CD4-positive, alpha-beta T cell (primary cell): ENCODE measurements at regions of chr10 and their contacts with region 1.

Region 1: DNA sequence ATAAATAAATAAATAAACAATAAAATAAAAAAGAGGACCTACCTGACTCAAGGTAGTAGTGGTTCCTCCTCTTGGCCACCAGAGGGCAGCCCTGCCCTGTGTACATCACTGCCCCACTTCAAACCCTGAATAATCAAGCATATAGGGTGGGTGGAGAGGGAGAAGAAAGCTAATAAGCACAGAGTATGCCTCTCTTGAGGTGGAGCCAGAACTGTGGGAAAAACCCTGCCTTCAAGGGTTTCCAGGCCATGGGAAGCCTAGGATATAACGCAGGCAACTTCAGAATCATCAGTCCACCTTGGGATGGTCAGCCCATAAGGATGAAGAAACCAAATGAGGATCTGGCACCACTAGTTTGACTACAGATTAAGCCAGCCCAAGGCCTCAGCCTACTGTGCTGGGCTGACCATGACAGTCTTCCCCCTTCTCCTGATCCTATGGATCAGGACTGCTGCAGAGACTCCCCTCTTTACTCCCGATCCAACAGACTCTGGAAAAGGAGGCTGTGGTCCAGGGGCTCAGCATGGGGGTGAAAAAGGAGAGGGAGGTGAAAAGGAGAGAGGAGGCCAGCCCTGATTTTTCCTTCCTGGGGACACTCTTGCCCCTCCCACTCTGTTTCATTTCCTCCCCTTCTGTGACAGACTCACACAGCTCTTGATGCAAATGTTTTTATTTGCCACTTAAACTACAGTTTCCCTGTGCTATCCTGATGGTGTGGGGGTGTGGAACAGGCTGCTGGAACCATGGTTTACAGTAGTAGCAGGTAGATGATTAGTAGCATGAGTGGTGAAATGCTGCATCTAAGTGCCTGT is 10.1 kb downstream of the AVPI1 start:
- DNase-seq: peak; percentile 19 to 82 (median 44)
- ATAC-seq: peak; percentile 94
- H3K4me3 ChIP-seq: no peak overlapping the region
- H3K4me3 Mint-ChIP-seq: no peak overlapping the region
- H3K27ac ChIP-seq: no peak overlapping the region
- H3K27ac Mint-ChIP-seq: no peak overlapping the region
- H3K4me1 ChIP-seq: peaks cover 5% of the 10 kb centered on the region
- H3K4me1 Mint-ChIP-seq: no peaks in the 10 kb centered on the region
- H3K27me3 ChIP-seq: no peaks in the 10 kb centered on the region
- H3K27me3 Mint-ChIP-seq: no peaks in the 10 kb centered on the region
- CTCF ChIP-seq: peak; percentile 91

Region 2: DNA sequence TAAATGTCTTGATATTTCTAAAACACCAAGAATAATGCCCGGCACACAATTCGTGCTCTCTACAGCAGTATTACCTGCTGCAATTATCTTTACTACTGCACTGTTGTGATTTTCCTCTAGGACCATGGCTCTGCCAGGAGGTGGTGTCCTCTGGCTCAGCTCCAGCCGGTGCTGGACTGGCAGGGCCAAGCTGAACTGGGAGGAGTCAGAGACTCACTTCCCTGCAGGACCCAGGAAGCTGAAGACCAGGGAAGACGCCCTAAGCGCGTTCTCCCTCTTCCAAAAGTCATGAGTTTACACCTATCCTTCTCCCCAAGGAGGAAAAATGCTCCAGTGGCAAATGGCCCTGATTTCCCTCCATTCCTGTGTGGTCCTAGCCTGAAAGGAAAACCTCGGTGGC is 506.6 kb before region 1 on chr10:
- CTCF ChIA-PET with region 1: no interaction called
- POLR2A ChIA-PET with region 1: no interaction called
- intact Hi-C with region 1: no loop called
- DNase-seq: no peak
- ATAC-seq: no peak
- H3K4me3 ChIP-seq: no peak overlapping the region
- H3K4me3 Mint-ChIP-seq: no peak overlapping the region
- H3K27ac ChIP-seq: no peak overlapping the region
- H3K27ac Mint-ChIP-seq: no peak overlapping the region
- H3K4me1 ChIP-seq: no peaks in the 10 kb centered on the region
- H3K4me1 Mint-ChIP-seq: no peaks in the 10 kb centered on the region
- H3K27me3 ChIP-seq: peaks cover 0 to 10% of the 10 kb centered on the region in 2 experiments
- H3K27me3 Mint-ChIP-seq: peaks cover 4% of the 10 kb centered on the region
- CTCF ChIP-seq: no peak

Region 3: GRCh38 chr10:97686962-97687784 is 10.2 kb after region 1 on chr10 and contains the start of gene AVPI1:
- CTCF ChIA-PET with region 1: interaction called, 27 read pairs
- POLR2A ChIA-PET with region 1: interaction called, 21 read pairs
- intact Hi-C with region 1: no loop called
- DNase-seq: peak; percentile 90 to 98 (median 94)
- ATAC-seq: peak; percentile 91
- H3K4me3 ChIP-seq: peak within 1 kb of the TSS; percentile 82
- H3K4me3 Mint-ChIP-seq: peak within 1 kb of the TSS; percentile 90
- H3K27ac ChIP-seq: peak within 1 kb of the TSS; percentile 52 to 62
- H3K27ac Mint-ChIP-seq: peak within 1 kb of the TSS; percentile 75
- H3K4me1 ChIP-seq: peaks cover 35% of the 10 kb centered on the region
- H3K4me1 Mint-ChIP-seq: peaks cover 16% of the 10 kb centered on the region
- H3K27me3 ChIP-seq: no peaks in the 10 kb centered on the region
- H3K27me3 Mint-ChIP-seq: no peaks in the 10 kb centered on the region
- CTCF ChIP-seq: no peak
- total RNA-seq, gene AVPI1: 10.7 to 11.6 TPM

Region 4: DNA sequence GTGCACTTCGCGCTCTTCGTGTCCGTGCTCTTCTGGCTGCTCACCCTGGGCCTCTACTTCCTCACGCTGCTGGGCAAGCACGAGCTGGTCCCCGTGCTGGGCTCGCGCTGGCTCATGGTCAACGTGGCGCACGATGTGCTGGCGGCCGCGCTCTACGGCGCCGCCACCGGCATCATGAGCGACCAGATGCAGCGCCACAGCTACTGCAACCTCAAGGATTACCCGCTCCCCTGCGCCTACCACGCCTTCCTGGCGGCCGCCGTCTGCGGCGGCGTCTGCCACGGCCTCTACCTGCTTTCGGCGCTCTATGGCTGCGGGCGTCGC is 37.0 kb after region 1 on chr10:
- CTCF ChIA-PET with region 1: interaction called, 3 read pairs
- POLR2A ChIA-PET with region 1: no interaction called
- intact Hi-C with region 1: loop called (anchors 5 kb)
- DNase-seq: peak; percentile 26 to 89 (median 44)
- ATAC-seq: peak; percentile 85
- H3K4me3 ChIP-seq: peak overlapping the region; percentile 67
- H3K4me3 Mint-ChIP-seq: peak overlapping the region; percentile 100
- H3K27ac ChIP-seq: no peak overlapping the region
- H3K27ac Mint-ChIP-seq: peak overlapping the region; percentile 35
- H3K4me1 ChIP-seq: peaks cover 22% of the 10 kb centered on the region
- H3K4me1 Mint-ChIP-seq: peaks cover 15% of the 10 kb centered on the region
- H3K27me3 ChIP-seq: peaks cover 0 to 7% of the 10 kb centered on the region in 2 experiments
- H3K27me3 Mint-ChIP-seq: peaks cover 28% of the 10 kb centered on the region
- CTCF ChIP-seq: no peak

Region 5: DNA sequence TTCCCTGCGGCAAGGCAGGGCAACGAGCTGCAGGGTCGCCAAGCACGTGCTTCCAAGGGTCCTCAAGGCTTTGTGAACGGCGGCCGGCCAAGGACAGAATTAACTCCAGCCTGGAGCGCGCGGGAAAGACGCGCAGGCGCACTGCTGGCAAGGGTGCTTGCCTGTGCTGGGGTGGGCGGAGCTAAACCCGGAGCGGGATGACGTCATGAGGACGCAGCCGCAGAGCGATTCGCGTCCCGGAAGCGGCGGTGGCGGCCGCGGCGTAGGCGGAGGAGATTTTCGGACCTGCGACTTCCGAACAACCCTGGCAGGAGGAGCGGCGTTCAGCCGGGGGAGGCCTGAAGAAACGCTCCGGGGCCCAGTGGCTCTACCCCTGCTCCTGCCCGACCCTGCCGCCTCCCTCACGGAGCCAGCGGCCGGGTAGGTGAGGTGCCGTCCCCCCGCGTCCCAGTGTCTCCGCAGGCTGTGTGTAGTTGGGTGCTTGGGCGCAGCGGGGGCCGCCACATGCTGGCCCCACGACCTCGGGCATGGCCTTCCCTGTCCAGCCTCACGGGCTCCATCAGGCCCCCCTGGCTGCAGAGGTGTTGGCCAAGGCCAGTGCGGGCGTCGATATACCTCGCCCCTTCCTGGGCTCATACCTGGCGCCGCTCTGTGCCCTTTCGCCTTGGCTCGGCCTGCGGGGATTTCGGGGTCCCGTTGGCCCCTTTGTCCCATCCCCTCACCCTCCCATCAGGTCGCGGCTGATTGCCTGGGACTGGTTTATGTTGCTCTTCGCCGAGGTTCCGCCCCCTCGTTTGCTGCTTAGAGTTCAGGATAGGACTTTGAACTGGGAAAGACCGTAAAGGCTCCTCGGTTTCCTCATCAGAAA is 60.2 kb after region 1 on chr10 and contains the start of gene ZFYVE27:
- CTCF ChIA-PET with region 1: interaction called, 15 read pairs
- POLR2A ChIA-PET with region 1: interaction called, 5 read pairs
- intact Hi-C with region 1: no loop called
- DNase-seq: peak; percentile 91 to 98 (median 94)
- ATAC-seq: peak; percentile 90
- H3K4me3 ChIP-seq: peak within 1 kb of the TSS; percentile 80
- H3K4me3 Mint-ChIP-seq: peak within 1 kb of the TSS; percentile 97
- H3K27ac ChIP-seq: peak within 1 kb of the TSS; percentile 85 to 92
- H3K27ac Mint-ChIP-seq: peak within 1 kb of the TSS; percentile 92
- H3K4me1 ChIP-seq: peaks cover 37% of the 10 kb centered on the region
- H3K4me1 Mint-ChIP-seq: peaks cover 57% of the 10 kb centered on the region
- H3K27me3 ChIP-seq: no peaks in the 10 kb centered on the region
- H3K27me3 Mint-ChIP-seq: no peaks in the 10 kb centered on the region
- CTCF ChIP-seq: no peak
- total RNA-seq, gene ZFYVE27: 58.4 to 60.6 TPM

Region 6: GRCh38 chr10:98028168-98028770 is 351.3 kb after region 1 on chr10:
- CTCF ChIA-PET with region 1: no interaction called
- POLR2A ChIA-PET with region 1: no interaction called
- intact Hi-C with region 1: no loop called
- DNase-seq: peak; percentile 22 to 77 (median 44)
- ATAC-seq: peak; percentile 56
- H3K4me3 ChIP-seq: no peak overlapping the region
- H3K4me3 Mint-ChIP-seq: peak overlapping the region; percentile 8
- H3K27ac ChIP-seq: no peak overlapping the region
- H3K27ac Mint-ChIP-seq: no peak overlapping the region
- H3K4me1 ChIP-seq: peaks cover 8% of the 10 kb centered on the region
- H3K4me1 Mint-ChIP-seq: peaks cover 12% of the 10 kb centered on the region
- H3K27me3 ChIP-seq: peaks cover 38 to 66% of the 10 kb centered on the region in 2 experiments
- H3K27me3 Mint-ChIP-seq: peaks cover 74% of the 10 kb centered on the region
- CTCF ChIP-seq: peak; percentile 60

Region 7: DNA sequence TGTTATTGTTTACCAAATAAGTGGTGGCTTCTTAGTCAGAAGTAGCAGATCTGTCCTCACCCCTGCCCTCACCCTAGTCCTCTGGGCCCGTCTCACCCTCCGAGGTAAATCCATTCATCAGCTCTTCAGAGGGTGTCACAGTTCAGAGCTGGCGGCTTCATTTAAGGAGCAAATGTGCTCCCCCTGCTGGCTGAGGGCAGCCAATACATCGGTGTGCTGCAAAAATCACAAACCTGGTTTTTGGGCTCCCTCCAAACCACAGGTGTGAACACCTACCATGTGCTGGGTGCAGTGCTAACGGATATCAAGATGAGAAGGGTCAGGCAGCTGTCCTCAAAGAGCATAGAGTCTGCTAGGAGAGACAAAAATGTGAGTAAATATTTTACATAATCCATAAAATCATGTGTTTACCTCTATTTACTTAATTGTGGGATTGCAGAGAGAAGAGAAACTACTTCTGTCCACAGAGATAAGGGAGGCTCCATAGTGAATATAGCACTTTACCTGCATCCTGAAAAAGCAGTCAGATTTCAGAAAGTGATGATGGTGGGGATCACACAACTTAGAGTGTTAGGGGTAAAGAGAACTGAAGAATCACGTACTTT is 368.9 kb after region 1 on chr10:
- CTCF ChIA-PET with region 1: no interaction called
- POLR2A ChIA-PET with region 1: no interaction called
- intact Hi-C with region 1: loop called in 1 of 2 experiments (anchors 10 kb)
- DNase-seq: peak; percentile 29 to 78 (median 44)
- ATAC-seq: peak; percentile 88
- H3K4me3 ChIP-seq: no peak overlapping the region
- H3K4me3 Mint-ChIP-seq: no peak overlapping the region
- H3K27ac ChIP-seq: no peak overlapping the region
- H3K27ac Mint-ChIP-seq: no peak overlapping the region
- H3K4me1 ChIP-seq: peaks cover 3% of the 10 kb centered on the region
- H3K4me1 Mint-ChIP-seq: no peaks in the 10 kb centered on the region
- H3K27me3 ChIP-seq: peaks cover 13 to 25% of the 10 kb centered on the region in 2 experiments
- H3K27me3 Mint-ChIP-seq: peaks cover 39% of the 10 kb centered on the region
- CTCF ChIP-seq: peak; percentile 90